Activated naive CD8-positive, alpha-beta T cell treated with anti-CD3 and anti-CD28 coated beads, Interleukin-2, amount 10 ng/mL, durations not matched to agents 7 days and 5 days (primary cell): ENCODE measurements at regions of chr2 and their contacts with region 1.

Region 1: DNA sequence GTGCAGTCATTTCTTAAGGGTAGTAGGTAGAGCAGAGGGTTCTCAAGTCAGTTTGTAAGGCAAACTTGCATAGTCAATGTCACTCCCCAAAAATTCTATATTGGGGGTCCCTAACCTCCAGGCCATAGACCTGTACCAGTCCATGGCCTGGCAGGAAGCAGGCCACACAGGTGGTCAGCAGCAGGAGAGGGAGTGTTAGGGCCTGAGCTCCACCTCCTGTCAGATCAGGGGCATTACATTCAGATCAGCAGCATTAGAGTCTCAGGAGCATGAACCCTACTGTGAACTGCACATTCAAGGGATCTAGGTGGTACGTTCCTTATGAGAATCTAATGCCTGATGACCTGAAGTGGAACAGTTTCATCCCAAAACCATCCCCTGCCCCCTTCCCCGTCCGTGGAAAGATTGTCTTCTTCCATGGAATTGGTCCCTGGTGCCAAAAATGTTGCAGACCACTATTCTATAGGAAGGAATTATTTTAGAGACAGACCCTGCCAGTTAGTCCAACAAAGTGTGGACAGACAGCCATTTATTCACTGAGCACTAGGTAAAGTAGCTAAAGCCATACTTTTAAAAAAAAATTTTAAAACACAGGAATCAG is 6.7 kb downstream of the COA5 start:
- DNase-seq: no peak
- ATAC-seq: peak; percentile 65
- H3K4me3 Mint-ChIP-seq: no peak overlapping the region
- H3K27ac Mint-ChIP-seq: no peak overlapping the region
- H3K4me1 Mint-ChIP-seq: peaks cover 22% of the 10 kb centered on the region
- H3K27me3 Mint-ChIP-seq: no peaks in the 10 kb centered on the region

Region 2: DNA sequence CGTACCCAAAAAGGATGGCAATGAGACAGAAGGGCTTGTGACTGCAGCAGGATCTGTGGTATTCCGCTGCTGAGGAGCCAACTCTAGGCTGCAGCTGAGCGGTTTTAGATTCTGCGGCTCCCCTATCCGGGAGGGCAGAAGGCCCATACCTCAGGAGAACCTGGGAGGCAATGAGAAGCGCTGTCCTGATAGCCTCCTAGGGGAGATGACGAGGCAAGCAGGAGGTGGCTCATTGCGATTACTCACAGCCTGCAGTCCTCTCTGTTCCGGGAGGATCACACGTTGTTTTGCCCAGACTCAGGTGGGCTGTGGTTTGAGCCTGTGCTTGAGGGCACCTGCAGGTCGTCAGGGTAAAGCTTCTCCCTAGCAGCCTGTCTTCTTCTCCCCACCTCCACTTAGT is 58.4 kb before region 1 on chr2:
- POLR2A ChIA-PET with region 1: interaction called, 10 read pairs
- DNase-seq: no peak
- ATAC-seq: no peak
- H3K4me3 Mint-ChIP-seq: no peak overlapping the region
- H3K27ac Mint-ChIP-seq: peak overlapping the region; percentile 70
- H3K4me1 Mint-ChIP-seq: peaks cover 28% of the 10 kb centered on the region
- H3K27me3 Mint-ChIP-seq: no peaks in the 10 kb centered on the region

Region 3: DNA sequence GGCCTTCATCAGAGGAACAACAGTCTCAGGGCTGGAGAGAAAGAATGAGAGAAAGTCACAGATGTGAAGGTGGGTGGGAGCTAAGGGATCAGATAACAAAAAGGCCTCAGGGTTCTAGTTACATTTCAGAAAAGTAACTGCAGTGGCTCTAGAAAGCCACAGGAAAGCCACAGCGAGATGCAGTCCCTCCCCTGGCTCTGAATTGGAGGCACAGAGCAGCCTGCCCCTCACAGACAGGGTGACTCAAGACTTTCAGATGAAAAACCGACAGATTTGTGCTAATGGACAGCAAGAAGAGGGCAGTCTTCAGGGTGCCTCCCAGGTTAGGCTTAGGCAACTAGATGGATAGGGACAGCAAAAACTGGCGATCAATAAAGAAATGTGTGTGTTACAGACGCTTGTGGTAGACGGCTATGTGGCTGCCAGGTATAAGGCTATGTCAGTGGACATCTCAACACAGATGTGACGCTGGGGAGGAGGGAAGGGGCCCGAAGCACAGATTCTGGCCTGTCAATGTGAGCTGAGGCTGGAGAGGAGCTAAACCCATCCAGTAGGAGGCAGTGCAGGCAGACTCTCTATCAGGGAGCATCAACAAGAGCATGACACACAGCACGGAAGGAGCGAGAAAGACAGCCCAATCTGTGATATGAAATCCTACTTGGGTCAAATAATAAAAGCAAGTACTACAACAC is 32.9 kb after region 1 on chr2:
- POLR2A ChIA-PET with region 1: no interaction called
- DNase-seq: peak; percentile 49
- ATAC-seq: peak; percentile 76
- H3K4me3 Mint-ChIP-seq: peak overlapping the region; percentile 50
- H3K27ac Mint-ChIP-seq: peak overlapping the region; percentile 84
- H3K4me1 Mint-ChIP-seq: peaks cover 34% of the 10 kb centered on the region
- H3K27me3 Mint-ChIP-seq: no peaks in the 10 kb centered on the region